Activated T-helper 1 cell treated with anti-CD3 and anti-CD28 coated beads, Interleukin-12 subunit alpha, Interleukin-12 subunit beta, Interleukin-2, Interleukin-4 antibody, amounts not matched to agents 30 ng/mL and 10 ng/mL and 1 ng/mL, durations not matched to agents 14 hours and 24 hours and 36 hours (primary cell): ENCODE measurements at regions of chr7 and their contacts with region 1.

Region 1: GRCh38 chr7:44847508-44847920 is 373 bp downstream of the H2AZ2 start:
- DNase-seq: peak; percentile 81
- H3K4me3 Mint-ChIP-seq: peak overlapping the region; percentile 90
- H3K27ac Mint-ChIP-seq: peak overlapping the region; percentile 98
- H3K4me1 Mint-ChIP-seq: peaks cover 54% of the 10 kb centered on the region
- H3K27me3 Mint-ChIP-seq: no peaks in the 10 kb centered on the region

Region 2: GRCh38 chr7:44082541-44083207 is 764.8 kb before region 1 on chr7:
- intact Hi-C with region 1: loop called (anchors 1 kb)
- DNase-seq: peak; percentile 97
- H3K4me3 Mint-ChIP-seq: peak overlapping the region; percentile 90
- H3K27ac Mint-ChIP-seq: peak overlapping the region; percentile 84
- H3K4me1 Mint-ChIP-seq: peaks cover 28% of the 10 kb centered on the region
- H3K27me3 Mint-ChIP-seq: no peaks in the 10 kb centered on the region

Region 3: GRCh38 chr7:44581879-44582603 is 265.5 kb before region 1 on chr7 and contains the start of gene TMED4:
- intact Hi-C with region 1: loop called (anchors 1 kb)
- DNase-seq: peak; percentile 100
- H3K4me3 Mint-ChIP-seq: peak within 1 kb of the TSS; percentile 93
- H3K27ac Mint-ChIP-seq: peak within 1 kb of the TSS; percentile 93
- H3K4me1 Mint-ChIP-seq: peaks cover 33% of the 10 kb centered on the region
- H3K27me3 Mint-ChIP-seq: no peaks in the 10 kb centered on the region
- total RNA-seq, gene TMED4: 74.9 and 79.6 TPM in 2 replicates

Region 4: DNA sequence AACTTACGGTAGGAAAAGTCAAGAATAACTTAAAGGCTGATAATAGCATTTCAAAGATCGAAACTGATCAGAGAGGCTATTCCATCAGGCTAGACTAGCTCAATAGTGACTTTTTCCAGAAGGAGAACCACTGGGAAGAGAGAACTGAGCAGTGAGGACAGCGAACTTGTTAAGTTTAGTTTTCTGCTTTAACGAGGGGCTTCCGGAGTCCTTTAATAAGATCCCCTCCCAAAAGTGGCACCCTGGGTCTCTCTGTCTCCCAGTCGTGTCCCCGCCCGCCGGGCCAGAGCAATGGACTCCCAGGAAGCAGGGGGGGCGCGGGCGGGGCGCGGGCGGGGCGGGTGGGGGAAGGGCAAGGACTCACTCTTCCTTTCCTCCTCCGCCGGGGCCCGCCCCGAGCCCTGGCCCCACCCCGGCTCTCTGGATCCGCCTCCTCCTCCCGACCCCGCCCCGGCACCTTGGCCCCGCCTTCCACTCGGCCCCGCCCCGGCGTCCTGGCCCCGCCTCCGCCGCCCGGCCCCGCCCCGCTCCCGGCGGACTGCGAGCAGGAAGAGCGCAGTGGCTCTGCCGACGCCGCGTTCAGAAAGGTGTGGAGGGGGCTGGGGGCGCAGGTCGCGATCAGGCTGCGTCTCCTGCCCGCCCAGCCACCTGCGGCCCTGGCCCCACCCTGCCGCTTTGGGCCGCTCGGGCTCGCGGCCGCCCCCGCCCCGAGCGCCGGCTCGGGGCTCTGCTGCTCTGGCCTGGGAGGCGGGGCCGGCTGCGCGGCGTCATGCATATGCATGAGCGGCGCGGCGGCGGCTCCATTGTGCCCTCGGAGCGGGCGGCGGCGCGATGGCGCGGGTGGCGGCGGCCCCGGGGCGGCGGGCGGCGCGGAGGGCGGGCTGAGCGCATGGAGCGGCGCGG is 99.2 kb before region 1 on chr7 and contains the start of gene ZMIZ2:
- intact Hi-C with region 1: loop called (anchors 1 kb)
- DNase-seq: peak; percentile 88
- H3K4me3 Mint-ChIP-seq: peak within 1 kb of the TSS; percentile 92
- H3K27ac Mint-ChIP-seq: peak within 1 kb of the TSS; percentile 95
- H3K4me1 Mint-ChIP-seq: peaks cover 45% of the 10 kb centered on the region
- H3K27me3 Mint-ChIP-seq: no peaks in the 10 kb centered on the region
- total RNA-seq, gene ZMIZ2: 123 and 129 TPM in 2 replicates

Region 5: GRCh38 chr7:44791278-44792219 is 56.0 kb before region 1 on chr7:
- intact Hi-C with region 1: no loop called
- DNase-seq: no peak
- H3K4me3 Mint-ChIP-seq: no peak overlapping the region
- H3K27ac Mint-ChIP-seq: no peak overlapping the region
- H3K4me1 Mint-ChIP-seq: no peaks in the 10 kb centered on the region
- H3K27me3 Mint-ChIP-seq: no peaks in the 10 kb centered on the region

Region 6: DNA sequence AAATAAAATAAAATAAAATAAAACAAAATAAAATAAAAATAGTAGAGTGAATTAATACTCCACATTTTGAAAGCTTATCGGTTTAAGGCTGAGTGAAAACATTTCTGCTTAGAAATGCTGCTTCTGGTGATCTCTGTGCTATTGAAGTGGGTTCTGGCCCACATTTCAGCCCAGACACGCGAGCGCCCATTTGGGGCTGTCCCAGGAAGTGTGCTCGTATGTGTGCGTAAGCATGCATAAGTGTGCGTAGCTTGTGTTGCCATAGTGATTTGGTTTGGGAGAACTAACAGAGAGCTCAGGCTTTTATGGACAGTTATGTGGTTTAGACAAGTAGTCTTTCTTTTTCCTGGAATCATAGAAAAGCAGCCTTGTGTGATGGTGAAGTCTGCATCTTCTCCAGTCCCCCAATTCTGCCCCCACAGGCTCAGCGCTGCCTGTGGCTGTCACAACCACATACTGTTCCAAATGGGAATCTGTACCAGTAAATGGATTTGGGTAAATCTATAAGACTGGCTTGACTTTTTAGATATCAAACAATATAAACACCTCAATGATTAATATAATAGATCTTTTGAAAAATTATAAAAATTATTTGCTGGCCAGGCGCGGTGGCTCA is 67.6 kb after region 1 on chr7:
- intact Hi-C with region 1: loop called (anchors 1 kb)
- DNase-seq: peak; percentile 78
- H3K4me3 Mint-ChIP-seq: peak overlapping the region; percentile 67
- H3K27ac Mint-ChIP-seq: peak overlapping the region; percentile 85
- H3K4me1 Mint-ChIP-seq: peaks cover 16% of the 10 kb centered on the region
- H3K27me3 Mint-ChIP-seq: peaks cover 2% of the 10 kb centered on the region

Region 7: GRCh38 chr7:45080265-45080962 is 232.9 kb after region 1 on chr7:
- intact Hi-C with region 1: no loop called
- DNase-seq: no peak
- H3K4me3 Mint-ChIP-seq: no peak overlapping the region
- H3K27ac Mint-ChIP-seq: peak overlapping the region; percentile 76
- H3K4me1 Mint-ChIP-seq: no peaks in the 10 kb centered on the region
- H3K27me3 Mint-ChIP-seq: no peaks in the 10 kb centered on the region

Region 8: DNA sequence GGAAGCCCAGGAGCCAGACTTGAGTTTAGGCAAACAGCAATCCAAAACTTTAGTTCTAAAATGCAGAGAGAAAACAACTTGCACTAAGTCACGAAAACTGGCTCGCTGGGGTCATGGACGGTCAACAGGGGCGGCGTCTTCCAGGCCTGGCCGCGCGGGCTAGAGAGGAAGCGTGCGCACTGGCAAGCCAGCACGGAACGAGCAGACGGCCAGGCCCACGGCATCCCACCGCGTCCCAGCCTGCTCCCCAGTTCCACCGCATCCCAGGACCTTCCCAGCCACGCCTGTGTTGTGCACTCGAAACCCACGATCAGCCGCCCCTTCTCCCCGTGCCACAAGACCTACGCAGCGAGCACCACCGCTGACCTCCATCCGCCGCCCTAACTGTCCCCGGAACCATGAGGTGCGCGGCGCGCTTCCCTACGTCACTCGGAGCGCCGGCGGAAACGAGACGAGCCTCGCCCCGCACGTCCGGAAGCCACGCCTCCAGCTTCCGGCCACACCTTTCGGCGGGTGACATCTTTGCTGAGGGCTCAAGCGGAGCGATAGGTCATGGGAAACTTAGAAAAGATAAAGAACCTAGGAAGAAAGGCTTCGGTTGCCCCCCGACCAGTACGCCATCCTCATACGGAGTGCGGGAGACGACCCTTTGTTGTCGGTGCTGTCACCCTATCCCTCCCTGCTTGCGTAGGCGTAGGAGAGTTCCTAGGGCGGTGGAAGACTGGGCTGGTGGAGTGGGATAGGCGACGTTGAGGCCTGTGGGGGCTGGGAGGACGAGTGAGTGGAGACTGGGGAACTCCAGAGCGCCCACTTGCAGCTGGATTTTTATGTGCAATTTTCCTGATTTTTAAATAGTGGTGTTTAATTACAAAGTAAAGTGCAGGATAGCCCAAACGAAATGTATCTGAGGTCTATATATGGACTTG is 264.0 kb after region 1 on chr7 and contains the start of gene TBRG4:
- intact Hi-C with region 1: loop called (anchors 2 kb)
- DNase-seq: peak; percentile 94
- H3K4me3 Mint-ChIP-seq: peak within 1 kb of the TSS; percentile 96
- H3K27ac Mint-ChIP-seq: peak within 1 kb of the TSS; percentile 97
- H3K4me1 Mint-ChIP-seq: peaks cover 39% of the 10 kb centered on the region
- H3K27me3 Mint-ChIP-seq: peaks cover 12% of the 10 kb centered on the region
- total RNA-seq, gene TBRG4: 176 and 195 TPM in 2 replicates

Region 9: DNA sequence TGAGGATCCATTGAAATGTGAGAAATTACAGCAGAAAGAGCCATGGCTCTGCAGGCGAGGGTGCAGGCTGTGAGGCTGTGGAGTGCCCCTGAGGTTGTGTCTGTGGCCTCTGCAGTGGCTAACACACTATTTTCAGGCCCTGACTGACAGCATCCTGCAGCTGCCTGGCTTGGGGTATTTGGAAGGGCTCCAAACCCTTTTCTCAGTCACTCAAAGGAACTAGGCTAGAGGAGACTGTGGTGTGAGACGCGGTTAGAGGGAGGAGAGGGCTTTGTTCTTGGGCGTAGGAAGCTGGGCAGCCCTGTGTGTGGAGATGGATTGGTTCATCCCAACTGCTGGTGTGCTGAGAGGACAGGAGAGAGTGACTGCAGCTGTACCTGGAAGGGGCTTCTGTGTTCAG is 445.0 kb after region 1 on chr7:
- intact Hi-C with region 1: no loop called
- DNase-seq: no peak
- H3K4me3 Mint-ChIP-seq: no peak overlapping the region
- H3K27ac Mint-ChIP-seq: no peak overlapping the region
- H3K4me1 Mint-ChIP-seq: no peaks in the 10 kb centered on the region
- H3K27me3 Mint-ChIP-seq: peaks cover 3% of the 10 kb centered on the region